ENCODE measurements at regions of chr4 and their contacts with region 1.

Region 1: DNA sequence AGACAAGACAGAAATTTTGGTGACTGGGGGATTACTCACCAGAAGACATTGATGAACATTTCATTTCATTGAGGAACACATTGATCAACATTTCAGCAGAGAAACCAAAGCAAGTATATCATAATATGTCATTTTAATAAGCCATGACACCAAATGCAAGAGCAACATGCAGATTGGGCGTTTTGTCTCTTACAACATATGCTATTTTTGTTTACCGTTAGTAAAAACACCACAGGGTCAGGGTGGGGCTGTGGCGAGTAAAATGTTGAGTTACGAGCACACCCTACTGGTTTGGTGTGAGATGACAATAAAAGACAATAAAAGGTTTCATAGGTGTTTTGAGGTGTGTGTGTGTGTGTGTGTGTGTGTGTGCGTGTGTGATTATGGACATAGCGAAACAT is 294.5 kb downstream of the PDGFC start:
- DNase-seq: peak in 1 of 2 experiments; percentile 2
- H3K4me3 ChIP-seq: no peak overlapping the region
- H3K27ac ChIP-seq: no peak overlapping the region
- H3K4me1 ChIP-seq: peaks cover 0 to 4% (median 0%) of the 10 kb centered on the region in 4 experiments; a peak in 1 of 7 replicates
- H3K27me3 ChIP-seq: no peaks in the 10 kb centered on the region
- CTCF ChIP-seq: peak; percentile 11 to 71 (median 62)
- EP300 ChIP-seq: no peak
- POLR2A ChIP-seq: no peak
- RAD21 ChIP-seq: peak; percentile 89

Region 2: DNA sequence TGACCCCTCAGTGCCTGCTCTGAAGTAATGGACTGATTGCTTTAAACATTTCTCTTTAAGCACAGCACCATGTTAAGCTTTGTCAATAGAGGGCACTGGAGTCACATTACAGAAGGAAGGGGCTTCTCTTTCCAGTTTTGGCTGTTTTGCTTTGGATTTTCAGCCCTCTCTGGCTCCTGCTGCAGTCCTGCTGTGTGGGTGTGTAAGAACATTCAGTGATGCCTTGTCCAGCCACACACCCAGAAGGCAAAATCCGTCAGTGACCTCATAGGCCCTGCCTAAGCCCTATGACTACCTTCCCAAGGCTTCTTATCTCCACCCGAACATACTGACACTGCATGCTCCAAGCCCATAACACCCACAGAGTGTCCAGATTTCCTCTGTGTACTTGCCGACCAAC is 508.1 kb before region 1 on chr4:
- CTCF ChIA-PET with region 1: interaction called, 13 read pairs
- POLR2A ChIA-PET with region 1: no interaction called
- DNase-seq: peak; percentile 17 to 46
- H3K4me3 ChIP-seq: no peak overlapping the region
- H3K27ac ChIP-seq: no peak overlapping the region
- H3K4me1 ChIP-seq: peaks cover 0 to 2% (median 0%) of the 10 kb centered on the region in 4 experiments; a peak in 1 of 7 replicates
- H3K27me3 ChIP-seq: no peaks in the 10 kb centered on the region
- CTCF ChIP-seq: peak in 2 of 3 experiments; percentile 65 to 76; a peak in 3 of 4 replicates
- EP300 ChIP-seq: no peak
- POLR2A ChIP-seq: no peak
- RAD21 ChIP-seq: peak; percentile 88 to 91

Region 3: DNA sequence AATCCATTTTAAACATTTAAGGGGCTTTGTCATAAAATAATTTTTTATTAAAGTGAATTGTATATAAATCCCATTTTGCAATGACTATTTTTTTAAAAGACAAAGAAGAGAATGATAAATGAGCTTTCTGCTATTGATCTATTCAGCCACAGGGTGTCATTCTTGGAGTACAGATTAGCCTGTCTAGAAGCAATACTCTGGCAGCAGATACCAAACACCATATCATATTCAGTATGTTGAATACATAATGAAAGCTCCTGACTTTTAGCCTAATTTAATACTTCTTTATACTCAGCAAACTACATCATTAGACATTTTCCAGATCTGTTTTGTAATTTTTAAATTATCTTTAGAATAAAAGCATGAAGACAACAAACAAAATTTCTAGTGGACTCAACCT is 201.8 kb before region 1 on chr4:
- CTCF ChIA-PET with region 1: interaction called, 10 read pairs
- POLR2A ChIA-PET with region 1: no interaction called
- DNase-seq: no peak
- H3K4me3 ChIP-seq: no peak overlapping the region
- H3K27ac ChIP-seq: no peak overlapping the region
- H3K4me1 ChIP-seq: no peaks in the 10 kb centered on the region
- H3K27me3 ChIP-seq: no peaks in the 10 kb centered on the region
- CTCF ChIP-seq: peak in 2 of 3 experiments; percentile 21 to 39; a peak in 2 of 4 replicates
- EP300 ChIP-seq: no peak
- POLR2A ChIP-seq: no peak
- RAD21 ChIP-seq: peak; percentile 67 to 71

Region 4: DNA sequence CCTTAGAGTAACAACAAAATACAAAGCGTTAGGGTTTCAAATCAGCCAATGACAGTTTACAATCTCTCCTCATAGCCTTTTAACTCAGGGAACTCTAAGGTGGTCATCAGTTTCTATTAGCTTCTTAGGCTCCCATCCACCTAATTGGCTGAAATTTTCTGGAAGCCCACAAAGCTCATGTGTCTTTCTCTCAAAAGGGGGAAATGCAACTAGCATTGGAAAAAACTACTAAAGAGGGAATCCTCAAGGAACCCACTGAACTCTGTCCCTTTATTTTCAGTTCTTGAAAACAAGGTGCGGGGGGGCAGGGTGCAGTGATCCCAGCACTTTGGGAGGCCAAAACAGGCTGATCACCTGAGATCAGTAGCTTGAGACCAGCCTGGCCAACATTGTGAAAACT is 238.1 kb after region 1 on chr4:
- CTCF ChIA-PET with region 1: no interaction called
- POLR2A ChIA-PET with region 1: no interaction called
- DNase-seq: no peak
- H3K4me3 ChIP-seq: no peak overlapping the region
- H3K27ac ChIP-seq: no peak overlapping the region
- H3K4me1 ChIP-seq: peaks cover 0 to 3% (median 0%) of the 10 kb centered on the region in 4 experiments; a peak in 1 of 7 replicates
- H3K27me3 ChIP-seq: no peaks in the 10 kb centered on the region
- CTCF ChIP-seq: no peak
- EP300 ChIP-seq: no peak
- POLR2A ChIP-seq: no peak
- RAD21 ChIP-seq: no peak

Measured in H1 (cell line).